ENCODE measurements at regions of chr10 and their contacts with region 1.

Region 1: GRCh38 chr10:59625721-59626522 is 83.7 kb downstream of the SLC16A9 start:
- DNase-seq: peak; percentile 59 to 73
- ATAC-seq: peak; percentile 91 to 94; a peak in 5 of 6 replicates
- H3K4me3 ChIP-seq: no peak overlapping the region
- H3K27ac ChIP-seq: no peak overlapping the region
- H3K4me1 ChIP-seq: no peaks in the 10 kb centered on the region
- CTCF ChIP-seq: peak; percentile 91
- EP300 ChIP-seq: no peak
- POLR2A ChIP-seq: no peak
- RAD21 ChIP-seq: peak; percentile 95 to 96

Region 2: GRCh38 chr10:58414270-58415041 is 1211.5 kb before region 1 on chr10:
- CTCF ChIA-PET with region 1: interaction called, 11 read pairs
- POLR2A ChIA-PET with region 1: no interaction called
- DNase-seq: peak; percentile 57 to 82
- ATAC-seq: peak; percentile 83 to 84
- H3K4me3 ChIP-seq: no peak overlapping the region
- H3K27ac ChIP-seq: peak overlapping the region; percentile 60 to 86
- H3K4me1 ChIP-seq: peaks cover 37% of the 10 kb centered on the region
- CTCF ChIP-seq: peak; percentile 89
- EP300 ChIP-seq: no peak
- POLR2A ChIP-seq: no peak
- RAD21 ChIP-seq: peak; percentile 96 to 98

Region 3: DNA sequence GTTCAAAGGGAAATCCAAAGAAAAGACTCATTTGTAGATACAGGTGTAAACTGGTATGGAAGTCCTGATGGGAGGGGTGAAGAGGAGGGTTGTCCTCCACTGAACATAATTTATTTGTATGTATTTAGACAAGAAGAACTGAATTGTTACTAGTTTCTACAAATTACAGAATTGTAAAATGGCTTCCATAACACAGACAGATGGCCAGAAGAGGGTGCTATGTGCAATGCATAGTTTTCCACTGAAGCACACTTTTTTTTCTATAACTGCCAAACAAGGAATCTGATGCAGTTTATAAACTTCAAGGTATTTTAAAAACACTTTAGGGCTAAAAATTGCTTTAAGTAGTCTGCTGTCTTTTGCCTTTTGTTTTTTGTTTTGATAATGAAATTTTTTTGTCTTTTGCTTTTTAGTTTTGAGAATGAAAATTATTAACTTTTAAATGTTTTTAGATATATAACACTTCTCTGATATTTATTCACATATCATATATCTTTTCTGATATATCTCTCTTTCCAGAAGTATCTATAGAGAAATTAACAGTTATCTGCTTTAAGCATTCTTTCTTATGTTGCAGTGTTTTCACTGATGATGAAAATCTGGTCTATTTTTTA is 391.0 kb before region 1 on chr10:
- CTCF ChIA-PET with region 1: interaction called, 11 read pairs
- POLR2A ChIA-PET with region 1: no interaction called
- DNase-seq: peak in 1 of 2 experiments; percentile 44
- ATAC-seq: peak in 1 of 2 experiments; percentile 48; a peak in 1 of 6 replicates
- H3K4me3 ChIP-seq: no peak overlapping the region
- H3K27ac ChIP-seq: no peak overlapping the region
- H3K4me1 ChIP-seq: no peaks in the 10 kb centered on the region
- CTCF ChIP-seq: peak; percentile 64
- EP300 ChIP-seq: no peak
- POLR2A ChIP-seq: no peak
- RAD21 ChIP-seq: peak; percentile 52 to 55

Region 4: GRCh38 chr10:59611043-59611442 is 14.9 kb before region 1 on chr10:
- CTCF ChIA-PET with region 1: interaction called, 21 read pairs
- POLR2A ChIA-PET with region 1: no interaction called
- DNase-seq: no peak
- ATAC-seq: no peak
- H3K4me3 ChIP-seq: no peak overlapping the region
- H3K27ac ChIP-seq: no peak overlapping the region
- H3K4me1 ChIP-seq: no peaks in the 10 kb centered on the region
- CTCF ChIP-seq: no peak
- EP300 ChIP-seq: no peak
- POLR2A ChIP-seq: no peak
- RAD21 ChIP-seq: no peak

Region 5: GRCh38 chr10:59688921-59689351 is 63.0 kb after region 1 on chr10:
- CTCF ChIA-PET with region 1: no interaction called
- POLR2A ChIA-PET with region 1: no interaction called
- DNase-seq: no peak
- ATAC-seq: no peak
- H3K4me3 ChIP-seq: no peak overlapping the region
- H3K27ac ChIP-seq: no peak overlapping the region
- H3K4me1 ChIP-seq: no peaks in the 10 kb centered on the region
- CTCF ChIP-seq: no peak
- EP300 ChIP-seq: no peak
- POLR2A ChIP-seq: no peak
- RAD21 ChIP-seq: no peak

Region 6: DNA sequence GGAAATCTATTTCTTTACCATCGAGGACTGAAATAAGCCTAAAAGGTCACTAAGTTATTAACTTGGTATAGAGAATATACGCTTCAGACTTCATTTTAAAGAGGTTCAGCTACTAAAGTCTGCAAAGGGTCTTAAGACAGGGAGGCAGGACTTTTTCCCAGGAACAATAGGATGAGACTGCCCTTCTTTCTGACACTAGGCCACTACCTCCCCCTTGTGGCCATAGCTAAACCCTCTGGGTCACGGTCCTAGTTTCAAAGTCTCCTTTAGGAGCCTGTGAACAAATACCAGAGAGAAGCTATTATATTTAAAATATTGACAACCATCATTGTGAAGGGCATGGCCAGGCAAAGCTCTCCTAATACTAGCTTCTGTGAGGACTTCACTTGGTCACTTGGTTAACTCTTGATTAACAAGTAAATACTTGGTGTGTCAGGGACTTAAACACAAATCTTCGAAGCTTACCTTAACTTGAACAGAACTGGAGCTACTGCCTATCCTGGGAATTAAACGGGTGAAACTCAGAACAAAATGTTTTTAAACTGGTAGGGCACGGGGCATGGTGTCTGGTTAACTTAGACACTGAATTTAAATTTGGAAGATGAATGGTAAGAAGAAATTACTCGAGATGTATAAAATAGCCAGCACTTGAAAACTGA is 204.8 kb after region 1 on chr10:
- CTCF ChIA-PET with region 1: interaction called, 26 read pairs
- POLR2A ChIA-PET with region 1: no interaction called
- DNase-seq: peak; percentile 55 to 60
- ATAC-seq: peak; percentile 85 to 96
- H3K4me3 ChIP-seq: no peak overlapping the region
- H3K27ac ChIP-seq: no peak overlapping the region
- H3K4me1 ChIP-seq: no peaks in the 10 kb centered on the region
- CTCF ChIP-seq: peak; percentile 75
- EP300 ChIP-seq: no peak
- POLR2A ChIP-seq: no peak
- RAD21 ChIP-seq: peak; percentile 56 to 62

Region 7: DNA sequence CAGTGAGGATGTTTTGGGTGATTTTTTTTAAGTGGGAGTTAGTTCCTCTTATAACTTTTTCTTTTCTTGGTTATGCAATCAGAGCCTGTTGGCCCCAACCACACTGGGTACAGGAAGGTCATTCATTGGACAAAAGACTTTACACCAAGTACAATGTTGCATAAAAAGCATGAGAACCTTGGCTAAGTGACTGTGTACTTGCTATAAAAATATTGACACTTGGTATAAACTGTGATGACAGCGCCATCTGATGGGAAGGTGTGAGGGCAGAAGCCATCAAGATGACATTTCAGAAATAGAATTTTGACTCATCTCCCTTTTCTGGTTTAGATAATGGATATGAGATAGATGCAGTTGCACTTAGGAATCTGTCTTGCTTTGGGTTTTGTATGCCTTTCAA is 406.8 kb after region 1 on chr10:
- CTCF ChIA-PET with region 1: interaction called, 26 read pairs
- POLR2A ChIA-PET with region 1: no interaction called
- DNase-seq: peak; percentile 35 to 67
- ATAC-seq: peak; percentile 66 to 82; a peak in 4 of 6 replicates
- H3K4me3 ChIP-seq: no peak overlapping the region
- H3K27ac ChIP-seq: no peak overlapping the region
- H3K4me1 ChIP-seq: no peaks in the 10 kb centered on the region
- CTCF ChIP-seq: peak; percentile 62
- EP300 ChIP-seq: no peak
- POLR2A ChIP-seq: no peak
- RAD21 ChIP-seq: peak; percentile 81

Measured in A549 (cell line).